Caco-2 (cell line): ENCODE measurements at regions of chr13 and their contacts with region 1.

Region 1: DNA sequence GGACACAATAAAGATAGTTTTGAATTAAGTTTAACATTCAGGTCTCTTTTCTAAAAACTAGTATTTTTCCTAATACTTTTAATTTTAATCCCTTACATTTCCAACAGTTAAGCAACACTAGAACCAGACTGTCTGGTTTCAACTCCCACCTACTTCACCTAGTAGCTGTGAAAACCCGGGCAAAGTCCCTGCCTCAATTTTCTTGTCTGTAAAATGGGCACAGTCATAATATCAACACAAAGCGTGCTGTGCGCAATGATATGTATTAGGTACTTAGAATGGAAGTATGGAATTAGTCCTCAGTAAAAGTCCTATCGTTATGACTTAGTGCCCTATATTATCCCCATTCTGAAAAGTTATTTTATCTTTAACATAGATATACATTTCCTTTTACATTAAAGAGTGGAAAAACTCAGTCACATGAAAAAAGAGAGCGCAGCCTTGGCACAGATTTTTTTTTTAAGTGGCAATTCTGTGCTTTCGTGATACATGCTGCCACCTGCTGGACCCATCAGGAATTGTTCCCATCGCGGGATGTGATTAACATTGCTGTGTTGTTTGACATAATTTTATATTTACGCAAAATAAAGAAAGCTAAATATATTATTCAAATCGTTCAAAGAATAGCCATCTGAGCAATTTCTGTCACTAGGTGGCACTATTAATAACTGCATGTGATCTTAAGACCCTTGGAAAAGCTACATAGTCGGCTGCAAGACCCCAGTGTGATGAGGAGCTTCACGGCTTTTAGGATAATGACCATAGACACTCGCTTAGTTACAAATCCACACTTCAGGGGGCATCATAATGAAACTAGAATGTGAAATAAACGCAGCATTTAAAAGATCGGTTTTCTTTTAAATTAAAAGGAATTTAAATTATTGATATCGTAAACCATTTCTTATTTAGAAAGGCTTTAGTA is 59.9 kb downstream of the LIG4 start:
- DNase-seq: peak; percentile 64 to 75
- H3K4me3 ChIP-seq: no peak overlapping the region
- H3K4me3 Mint-ChIP-seq: no peak overlapping the region
- H3K27ac Mint-ChIP-seq: peak overlapping the region; percentile 98
- H3K4me1 ChIP-seq: peaks cover 25% of the 10 kb centered on the region
- H3K4me1 Mint-ChIP-seq: peaks cover 11% of the 10 kb centered on the region
- H3K27me3 ChIP-seq: no peaks in the 10 kb centered on the region
- H3K27me3 Mint-ChIP-seq: no peaks in the 10 kb centered on the region
- CTCF ChIP-seq: peak; percentile 59 to 89

Region 2: GRCh38 chr13:107650081-107650701 is 505.3 kb before region 1 on chr13:
- CTCF ChIA-PET with region 1: no interaction called
- POLR2A ChIA-PET with region 1: no interaction called
- intact Hi-C with region 1: loop called (anchors 1 kb)
- DNase-seq: peak; percentile 64 to 76
- H3K4me3 ChIP-seq: no peak overlapping the region
- H3K4me3 Mint-ChIP-seq: no peak overlapping the region
- H3K27ac Mint-ChIP-seq: no peak overlapping the region
- H3K4me1 ChIP-seq: no peaks in the 10 kb centered on the region
- H3K4me1 Mint-ChIP-seq: no peaks in the 10 kb centered on the region
- H3K27me3 ChIP-seq: no peaks in the 10 kb centered on the region
- H3K27me3 Mint-ChIP-seq: peaks cover 14% of the 10 kb centered on the region
- CTCF ChIP-seq: peak; percentile 92 to 99

Region 3: GRCh38 chr13:107835339-107836018 is 320.0 kb before region 1 on chr13:
- CTCF ChIA-PET with region 1: no interaction called
- POLR2A ChIA-PET with region 1: no interaction called
- intact Hi-C with region 1: loop called (anchors 10 kb)
- DNase-seq: no peak
- H3K4me3 ChIP-seq: no peak overlapping the region
- H3K4me3 Mint-ChIP-seq: no peak overlapping the region
- H3K27ac Mint-ChIP-seq: no peak overlapping the region
- H3K4me1 ChIP-seq: no peaks in the 10 kb centered on the region
- H3K4me1 Mint-ChIP-seq: no peaks in the 10 kb centered on the region
- H3K27me3 ChIP-seq: no peaks in the 10 kb centered on the region
- H3K27me3 Mint-ChIP-seq: peaks cover 2% of the 10 kb centered on the region
- CTCF ChIP-seq: no peak

Region 4: DNA sequence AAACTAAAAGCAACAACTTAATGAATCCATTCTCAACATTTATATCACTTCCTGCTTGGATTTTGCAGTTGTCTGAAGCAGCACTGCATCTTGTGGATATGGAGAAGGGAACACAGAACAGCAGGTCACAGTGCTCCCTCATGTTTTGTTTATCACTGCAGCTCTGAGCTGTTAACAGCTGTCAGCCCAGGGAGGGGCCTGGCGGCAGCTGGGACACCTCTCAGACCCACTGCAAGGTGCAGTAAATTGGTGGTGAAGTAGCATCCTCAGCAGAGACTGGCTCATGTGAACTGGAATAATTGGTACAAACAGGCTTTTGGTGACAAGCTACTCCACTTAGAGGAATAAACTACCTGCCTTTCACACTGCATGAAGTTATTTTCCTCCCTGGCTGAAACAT is 110.5 kb before region 1 on chr13:
- CTCF ChIA-PET with region 1: no interaction called
- POLR2A ChIA-PET with region 1: no interaction called
- intact Hi-C with region 1: loop called (anchors 10 kb)
- DNase-seq: no peak
- H3K4me3 ChIP-seq: no peak overlapping the region
- H3K4me3 Mint-ChIP-seq: no peak overlapping the region
- H3K27ac Mint-ChIP-seq: no peak overlapping the region
- H3K4me1 ChIP-seq: no peaks in the 10 kb centered on the region
- H3K4me1 Mint-ChIP-seq: peaks cover 17% of the 10 kb centered on the region
- H3K27me3 ChIP-seq: no peaks in the 10 kb centered on the region; the same call in 1 of the 2 replicates
- H3K27me3 Mint-ChIP-seq: no peaks in the 10 kb centered on the region
- CTCF ChIP-seq: no peak

Region 5: DNA sequence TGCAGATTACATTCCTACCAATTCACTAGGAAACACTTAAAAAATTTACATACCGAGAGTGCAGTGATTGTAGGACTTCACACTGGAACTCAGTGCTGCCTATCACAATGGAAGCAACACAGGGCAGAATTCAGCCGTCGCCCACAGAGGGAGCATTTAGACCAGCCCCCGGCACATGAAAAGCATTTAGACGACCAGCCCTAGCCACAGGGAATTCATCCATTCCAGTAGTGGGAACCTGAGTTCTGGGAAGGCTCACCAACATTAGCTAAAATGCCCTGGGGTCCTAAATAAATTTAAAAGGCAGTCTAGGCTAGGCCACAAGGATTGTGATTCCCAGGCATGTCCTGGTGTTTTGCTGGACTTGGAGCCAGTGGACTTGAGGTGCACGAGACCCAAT is 95.3 kb before region 1 on chr13:
- CTCF ChIA-PET with region 1: no interaction called
- POLR2A ChIA-PET with region 1: no interaction called
- intact Hi-C with region 1: no loop called
- DNase-seq: no peak
- H3K4me3 ChIP-seq: no peak overlapping the region
- H3K4me3 Mint-ChIP-seq: no peak overlapping the region
- H3K27ac Mint-ChIP-seq: no peak overlapping the region
- H3K4me1 ChIP-seq: no peaks in the 10 kb centered on the region
- H3K4me1 Mint-ChIP-seq: no peaks in the 10 kb centered on the region
- H3K27me3 ChIP-seq: no peaks in the 10 kb centered on the region
- H3K27me3 Mint-ChIP-seq: no peaks in the 10 kb centered on the region
- CTCF ChIP-seq: no peak

Region 6: GRCh38 chr13:108137176-108137575 is 18.3 kb before region 1 on chr13:
- CTCF ChIA-PET with region 1: no interaction called
- POLR2A ChIA-PET with region 1: no interaction called
- intact Hi-C with region 1: loop called (anchors 1 kb)
- DNase-seq: no peak
- H3K4me3 ChIP-seq: no peak overlapping the region
- H3K4me3 Mint-ChIP-seq: no peak overlapping the region
- H3K27ac Mint-ChIP-seq: no peak overlapping the region
- H3K4me1 ChIP-seq: no peaks in the 10 kb centered on the region
- H3K4me1 Mint-ChIP-seq: no peaks in the 10 kb centered on the region
- H3K27me3 ChIP-seq: no peaks in the 10 kb centered on the region
- H3K27me3 Mint-ChIP-seq: no peaks in the 10 kb centered on the region
- CTCF ChIP-seq: no peak

Region 7: GRCh38 chr13:108508263-108508662 is 352.8 kb after region 1 on chr13:
- CTCF ChIA-PET with region 1: no interaction called
- POLR2A ChIA-PET with region 1: no interaction called
- intact Hi-C with region 1: no loop called
- DNase-seq: peak in 1 of 2 experiments; percentile 16
- H3K4me3 ChIP-seq: no peak overlapping the region
- H3K4me3 Mint-ChIP-seq: no peak overlapping the region
- H3K27ac Mint-ChIP-seq: no peak overlapping the region
- H3K4me1 ChIP-seq: no peaks in the 10 kb centered on the region
- H3K4me1 Mint-ChIP-seq: no peaks in the 10 kb centered on the region
- H3K27me3 ChIP-seq: no peaks in the 10 kb centered on the region
- H3K27me3 Mint-ChIP-seq: no peaks in the 10 kb centered on the region
- CTCF ChIP-seq: peak; percentile 27 to 50